PC-3 (cell line): ENCODE measurements at regions of chr11 and their contacts with region 1.

Region 1: GRCh38 chr11:131064373-131064991 is 148.2 kb upstream of the SNX19 start:
- DNase-seq: peak; percentile 82
- ATAC-seq: peak; percentile 93
- H3K4me3 ChIP-seq: no peak overlapping the region
- H3K27ac ChIP-seq: no peak overlapping the region
- H3K4me1 ChIP-seq: no peaks in the 10 kb centered on the region
- H3K27me3 ChIP-seq: peaks cover 94% of the 10 kb centered on the region
- CTCF ChIP-seq: peak; percentile 99

Region 2: GRCh38 chr11:130894322-130895025 is 170.0 kb before region 1 on chr11:
- CTCF ChIA-PET with region 1: no interaction called
- POLR2A ChIA-PET with region 1: no interaction called
- intact Hi-C with region 1: no loop called
- DNase-seq: peak; percentile 85
- ATAC-seq: peak; percentile 78
- H3K4me3 ChIP-seq: no peak overlapping the region
- H3K27ac ChIP-seq: no peak overlapping the region
- H3K4me1 ChIP-seq: peaks cover 30% of the 10 kb centered on the region
- H3K27me3 ChIP-seq: no peaks in the 10 kb centered on the region
- CTCF ChIP-seq: peak; percentile 97

Region 3: GRCh38 chr11:131025020-131025419 is 39.5 kb before region 1 on chr11:
- CTCF ChIA-PET with region 1: no interaction called
- POLR2A ChIA-PET with region 1: no interaction called
- intact Hi-C with region 1: loop called (anchors 1 kb)
- DNase-seq: peak; percentile 74
- ATAC-seq: peak; percentile 99
- H3K4me3 ChIP-seq: no peak overlapping the region
- H3K27ac ChIP-seq: no peak overlapping the region
- H3K4me1 ChIP-seq: no peaks in the 10 kb centered on the region
- H3K27me3 ChIP-seq: peaks cover 52% of the 10 kb centered on the region
- CTCF ChIP-seq: peak; percentile 95